Mammary epithelial cell (primary cell): ENCODE measurements at regions of chr19 and their contacts with region 1.

Region 1: GRCh38 chr19:5987077-5987818 is 9.3 kb upstream of the RANBP3 start:
- DNase-seq: peak; percentile 61
- H3K4me3 ChIP-seq: no peak overlapping the region
- H3K27ac ChIP-seq: no peak overlapping the region
- H3K4me1 ChIP-seq: peaks cover 15% of the 10 kb centered on the region
- H3K27me3 ChIP-seq: no peaks in the 10 kb centered on the region
- CTCF ChIP-seq: peak; percentile 93 to 94

Region 2: GRCh38 chr19:6021878-6022569 is 34.8 kb after region 1 on chr19:
- CTCF ChIA-PET with region 1: no interaction called
- dilution Hi-C with region 1: no loop called
- in situ Hi-C with region 1: no loop called
- intact Hi-C with region 1: loop called (anchors 1 kb)
- DNase-seq: peak; percentile 12
- H3K4me3 ChIP-seq: no peak overlapping the region
- H3K27ac ChIP-seq: no peak overlapping the region
- H3K4me1 ChIP-seq: no peaks in the 10 kb centered on the region
- H3K27me3 ChIP-seq: no peaks in the 10 kb centered on the region
- CTCF ChIP-seq: peak; percentile 51 to 74

Region 3: DNA sequence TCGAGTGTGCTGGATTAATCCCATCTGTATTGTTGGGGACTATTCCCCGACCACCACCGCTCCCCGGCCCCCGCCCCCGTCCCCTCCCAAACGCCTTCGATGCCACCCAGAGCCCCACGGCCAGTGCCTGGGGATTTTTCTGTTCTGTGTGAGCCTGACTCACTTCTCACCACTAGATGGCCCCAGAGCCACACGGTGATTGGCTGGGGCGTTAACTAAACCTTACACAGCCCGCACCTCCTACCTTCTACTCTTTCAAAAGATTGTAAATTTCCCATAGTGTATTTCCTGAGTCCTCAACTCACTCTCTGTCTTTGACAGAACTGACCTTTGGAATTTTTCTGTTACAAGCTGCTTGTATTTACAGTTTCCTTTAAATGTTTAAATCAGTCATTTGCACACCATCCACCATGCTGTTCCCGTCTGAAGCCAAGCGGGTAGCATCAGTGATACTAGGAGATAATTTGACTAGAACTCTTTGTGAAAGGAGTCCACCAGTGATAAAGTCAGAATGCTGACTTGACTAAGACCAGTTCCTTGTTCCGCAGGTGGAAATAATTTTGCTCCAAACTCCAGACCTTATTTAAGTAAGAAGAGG is 61.7 kb after region 1 on chr19:
- CTCF ChIA-PET with region 1: no interaction called
- dilution Hi-C with region 1: no loop called
- in situ Hi-C with region 1: no loop called
- intact Hi-C with region 1: loop called (anchors 1 kb)
- DNase-seq: peak; percentile 65
- H3K4me3 ChIP-seq: no peak overlapping the region
- H3K27ac ChIP-seq: no peak overlapping the region
- H3K4me1 ChIP-seq: no peaks in the 10 kb centered on the region
- H3K27me3 ChIP-seq: no peaks in the 10 kb centered on the region
- CTCF ChIP-seq: peak; percentile 87 to 91

Region 4: DNA sequence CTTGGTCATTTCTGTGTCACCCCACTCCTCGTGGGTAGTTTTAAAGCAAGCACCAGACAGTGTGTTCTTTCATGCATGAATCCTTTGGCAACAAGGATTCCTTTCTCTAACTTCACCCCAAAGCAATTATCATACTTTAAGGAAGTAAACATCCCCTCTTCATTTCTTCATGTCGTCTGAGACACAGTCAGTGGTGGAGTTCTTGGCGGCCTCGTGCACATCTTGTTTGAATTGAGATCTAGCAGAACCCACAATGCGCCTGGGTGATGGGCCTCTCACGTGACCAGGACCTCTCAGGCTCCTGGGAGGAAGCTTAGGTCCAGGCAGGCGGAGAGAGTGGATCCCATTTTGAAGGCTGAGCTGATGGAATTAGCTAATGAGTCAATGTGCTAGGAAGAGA is 150.8 kb after region 1 on chr19:
- CTCF ChIA-PET with region 1: no interaction called
- dilution Hi-C with region 1: loop called (anchors 5 kb)
- in situ Hi-C with region 1: no loop called
- intact Hi-C with region 1: no loop called
- DNase-seq: no peak
- H3K4me3 ChIP-seq: no peak overlapping the region
- H3K27ac ChIP-seq: no peak overlapping the region
- H3K4me1 ChIP-seq: no peaks in the 10 kb centered on the region
- H3K27me3 ChIP-seq: no peaks in the 10 kb centered on the region
- CTCF ChIP-seq: no peak